Activated CD8-positive, alpha-beta memory T cell treated with anti-CD3 and anti-CD28 coated beads, Interleukin-2, amount 10 ng/mL, durations not matched to agents 7 days and 5 days (primary cell): ENCODE measurements at regions of chr3 and their contacts with region 1.

Region 1: DNA sequence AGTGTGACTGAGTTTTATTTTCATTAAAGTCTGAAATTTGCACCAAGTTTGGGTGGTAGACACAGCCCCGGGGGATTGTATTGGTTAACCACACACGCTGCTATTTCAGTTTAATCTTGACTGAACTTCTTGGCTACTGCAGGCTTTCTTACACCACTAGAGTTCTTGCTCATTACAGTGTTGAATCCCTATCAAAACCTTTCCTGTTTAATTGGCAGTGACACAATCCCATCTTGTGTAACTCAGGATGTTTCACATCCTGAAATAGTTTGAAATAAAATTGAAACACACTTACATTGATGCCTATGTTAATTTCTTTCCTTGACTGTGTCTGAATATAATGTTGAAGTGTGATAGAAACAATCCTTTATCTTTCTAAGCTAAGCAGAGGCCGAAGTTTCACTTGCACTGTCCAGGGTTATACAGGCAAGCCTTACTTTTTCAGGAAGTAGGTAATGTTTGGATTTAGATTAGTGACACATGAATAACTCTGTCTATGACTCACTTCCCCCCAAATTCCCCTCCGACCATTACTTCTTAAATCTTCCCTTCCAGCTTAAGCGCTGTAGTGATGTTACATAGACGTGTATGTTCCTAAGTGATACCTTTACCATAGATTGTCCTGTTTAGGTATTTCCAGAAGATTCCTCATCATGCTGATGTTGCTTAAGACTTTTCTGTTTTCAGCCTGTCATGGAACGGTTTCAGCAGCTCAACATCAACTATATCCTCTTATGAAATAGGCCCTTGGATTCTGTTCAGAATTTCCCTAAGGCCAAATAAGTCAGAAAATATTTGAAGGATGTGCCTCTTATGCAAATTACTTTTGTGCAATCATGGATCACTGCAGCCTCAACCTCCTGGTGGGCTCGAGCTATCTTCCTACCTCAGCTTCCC is 16.8 kb downstream of the ATG7 start:
- DNase-seq: peak; percentile 63
- ATAC-seq: peak; percentile 37
- H3K4me3 Mint-ChIP-seq: peak overlapping the region; percentile 19
- H3K27ac Mint-ChIP-seq: peak overlapping the region; percentile 93
- H3K4me1 Mint-ChIP-seq: peaks cover 58% of the 10 kb centered on the region
- H3K27me3 Mint-ChIP-seq: no peaks in the 10 kb centered on the region

Region 2: GRCh38 chr3:11271986-11272904 is 16.8 kb before region 1 on chr3 and contains the start of gene ATG7:
- CTCF ChIA-PET with region 1: interaction called, 35 read pairs
- DNase-seq: peak; percentile 97
- ATAC-seq: peak; percentile 98
- H3K4me3 Mint-ChIP-seq: peak within 1 kb of the TSS; percentile 87
- H3K27ac Mint-ChIP-seq: peak within 1 kb of the TSS; percentile 88
- H3K4me1 Mint-ChIP-seq: peaks cover 47% of the 10 kb centered on the region
- H3K27me3 Mint-ChIP-seq: peaks cover 2% of the 10 kb centered on the region
- total RNA-seq, gene ATG7: 28.3 to 38.2 TPM

Region 3: DNA sequence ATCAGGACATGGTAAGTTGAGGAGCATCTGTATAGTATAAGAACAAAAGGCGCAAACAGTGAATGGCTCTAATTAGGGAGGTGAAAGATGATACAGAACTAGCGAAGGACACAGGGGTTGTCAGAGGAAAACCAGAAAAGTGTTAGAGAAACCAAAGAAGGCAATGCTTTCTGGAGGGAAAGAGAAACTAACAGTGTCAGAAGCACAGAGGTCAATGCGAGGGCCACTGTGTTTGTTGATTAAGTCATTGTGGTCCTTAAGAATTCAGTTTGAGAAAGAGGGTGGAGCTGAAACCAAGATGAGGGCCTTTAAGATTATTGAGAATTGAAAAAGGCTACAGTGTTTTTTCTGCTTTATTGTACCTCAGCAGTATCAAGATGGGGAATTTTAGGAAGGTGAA is 11.9 kb after region 1 on chr3:
- CTCF ChIA-PET with region 1: interaction called, 14 read pairs
- DNase-seq: peak; percentile 72
- ATAC-seq: peak; percentile 96
- H3K4me3 Mint-ChIP-seq: peak overlapping the region; percentile 59
- H3K27ac Mint-ChIP-seq: peak overlapping the region; percentile 87
- H3K4me1 Mint-ChIP-seq: peaks cover 49% of the 10 kb centered on the region
- H3K27me3 Mint-ChIP-seq: no peaks in the 10 kb centered on the region

Region 4: DNA sequence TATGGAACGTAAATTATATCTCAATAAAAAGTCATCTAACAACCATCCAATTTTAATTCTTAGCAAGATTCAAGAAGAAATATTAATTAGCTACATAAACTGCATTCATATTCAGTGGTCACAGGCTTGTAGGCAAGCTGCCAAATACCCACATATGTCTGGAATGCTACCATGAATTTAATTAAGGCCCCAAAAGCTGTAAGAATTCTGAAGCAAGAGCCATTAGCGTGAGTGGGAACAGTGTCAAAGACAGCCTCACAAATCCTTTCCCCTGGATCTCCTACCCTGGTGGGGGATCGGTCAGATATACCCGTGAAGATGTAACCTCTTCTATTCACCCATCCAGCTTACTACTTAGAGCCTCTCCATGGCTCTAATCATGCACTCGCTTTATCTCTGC is 23.1 kb after region 1 on chr3:
- CTCF ChIA-PET with region 1: no interaction called
- DNase-seq: no peak
- ATAC-seq: no peak
- H3K4me3 Mint-ChIP-seq: no peak overlapping the region
- H3K27ac Mint-ChIP-seq: no peak overlapping the region
- H3K4me1 Mint-ChIP-seq: peaks cover 8% of the 10 kb centered on the region
- H3K27me3 Mint-ChIP-seq: no peaks in the 10 kb centered on the region